ENCODE measurements at regions of chr15 and their contacts with region 1.

Region 1: GRCh38 chr15:97866959-97867358 is 93.5 kb upstream of the ARRDC4 start:
- DNase-seq: no peak
- H3K4me3 ChIP-seq: no peak overlapping the region
- H3K27ac ChIP-seq: no peak overlapping the region
- H3K4me1 ChIP-seq: peaks cover 0 to 3% (median 0%) of the 10 kb centered on the region in 4 donors
- H3K27me3 ChIP-seq: no peaks in the 10 kb centered on the region
- CTCF ChIP-seq: no peak
- EP300 ChIP-seq: no peak
- POLR2A ChIP-seq: no peak

Region 2: GRCh38 chr15:97817276-97817890 is 49.6 kb before region 1 on chr15:
- intact Hi-C with region 1: loop called (anchors 5 kb)
- DNase-seq: peak; percentile 64
- H3K4me3 ChIP-seq: no peak overlapping the region
- H3K27ac ChIP-seq: no peak overlapping the region
- H3K4me1 ChIP-seq: no peaks in the 10 kb centered on the region
- H3K27me3 ChIP-seq: no peaks in the 10 kb centered on the region
- CTCF ChIP-seq: no peak
- EP300 ChIP-seq: no peak
- POLR2A ChIP-seq: no peak

Region 3: DNA sequence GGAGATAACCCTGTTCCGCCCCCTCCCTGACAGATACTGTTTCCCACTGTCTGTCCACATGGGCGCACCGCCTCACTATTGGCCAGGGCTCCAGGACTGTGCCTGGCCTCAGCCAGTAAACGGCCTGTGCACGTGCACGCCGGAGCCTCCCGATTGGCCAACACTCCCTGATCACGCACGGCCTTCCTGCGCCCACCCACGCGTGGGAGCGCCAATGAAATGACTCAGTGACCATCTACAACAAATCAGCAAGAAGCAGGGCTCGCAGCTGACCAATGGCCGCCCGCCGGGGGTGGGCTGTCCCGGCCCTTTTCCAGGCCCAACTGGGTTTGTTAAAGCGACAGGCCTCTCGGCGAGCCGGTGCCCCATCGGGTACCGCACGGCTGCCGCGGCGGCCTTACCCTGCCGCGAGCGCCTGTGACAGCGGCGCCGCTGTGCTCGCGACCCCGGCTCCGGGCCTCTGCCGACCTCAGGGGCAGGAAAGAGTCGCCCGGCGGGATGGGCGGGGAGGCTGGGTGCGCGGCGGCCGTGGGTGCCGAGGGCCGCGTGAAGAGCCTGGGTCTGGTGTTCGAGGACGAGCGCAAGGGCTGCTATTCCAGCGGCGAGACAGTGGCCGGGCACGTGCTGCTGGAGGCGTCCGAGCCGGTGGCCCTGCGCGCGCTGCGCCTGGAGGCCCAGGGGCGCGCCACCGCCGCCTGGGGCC is 93.6 kb after region 1 on chr15 and contains the start of gene ARRDC4:
- intact Hi-C with region 1: no loop called
- DNase-seq: peak; percentile 100
- H3K4me3 ChIP-seq: peak within 1 kb of the TSS; percentile 93 to 100 (median 98)
- H3K27ac ChIP-seq: peak within 1 kb of the TSS; percentile 93 to 99 (median 98)
- H3K4me1 ChIP-seq: peaks cover 27 to 51% (median 43%) of the 10 kb centered on the region in 4 donors
- H3K27me3 ChIP-seq: no peaks in the 10 kb centered on the region
- CTCF ChIP-seq: peak in 1 of 3 experiments; percentile 22
- EP300 ChIP-seq: no peak
- POLR2A ChIP-seq: peak; percentile 65
- total RNA-seq, gene ARRDC4: 115 to 135 (median 128) TPM